PC-3 (cell line): ENCODE measurements at regions of chr13 and their contacts with region 1.

Region 1: GRCh38 chr13:49792550-49793324 is at the start of gene KPNA3:
- DNase-seq: peak; percentile 90
- ATAC-seq: peak; percentile 87
- H3K4me3 ChIP-seq: peak within 1 kb of the TSS; percentile 80
- H3K27ac ChIP-seq: peak within 1 kb of the TSS; percentile 91
- H3K4me1 ChIP-seq: peaks cover 18% of the 10 kb centered on the region
- H3K27me3 ChIP-seq: no peaks in the 10 kb centered on the region
- CTCF ChIP-seq: no peak
- total RNA-seq, gene KPNA3: 11.7 and 14.4 TPM in 2 replicates

Region 2: GRCh38 chr13:49669735-49670309 is 122.9 kb before region 1 on chr13:
- CTCF ChIA-PET with region 1: no interaction called
- POLR2A ChIA-PET with region 1: no interaction called
- intact Hi-C with region 1: loop called (anchors 2 kb)
- DNase-seq: peak; percentile 68
- ATAC-seq: peak; percentile 88
- H3K4me3 ChIP-seq: no peak overlapping the region
- H3K27ac ChIP-seq: no peak overlapping the region
- H3K4me1 ChIP-seq: peaks cover 6% of the 10 kb centered on the region; the same call in 1 of the 2 replicates
- H3K27me3 ChIP-seq: no peaks in the 10 kb centered on the region
- CTCF ChIP-seq: peak; percentile 75

Region 3: DNA sequence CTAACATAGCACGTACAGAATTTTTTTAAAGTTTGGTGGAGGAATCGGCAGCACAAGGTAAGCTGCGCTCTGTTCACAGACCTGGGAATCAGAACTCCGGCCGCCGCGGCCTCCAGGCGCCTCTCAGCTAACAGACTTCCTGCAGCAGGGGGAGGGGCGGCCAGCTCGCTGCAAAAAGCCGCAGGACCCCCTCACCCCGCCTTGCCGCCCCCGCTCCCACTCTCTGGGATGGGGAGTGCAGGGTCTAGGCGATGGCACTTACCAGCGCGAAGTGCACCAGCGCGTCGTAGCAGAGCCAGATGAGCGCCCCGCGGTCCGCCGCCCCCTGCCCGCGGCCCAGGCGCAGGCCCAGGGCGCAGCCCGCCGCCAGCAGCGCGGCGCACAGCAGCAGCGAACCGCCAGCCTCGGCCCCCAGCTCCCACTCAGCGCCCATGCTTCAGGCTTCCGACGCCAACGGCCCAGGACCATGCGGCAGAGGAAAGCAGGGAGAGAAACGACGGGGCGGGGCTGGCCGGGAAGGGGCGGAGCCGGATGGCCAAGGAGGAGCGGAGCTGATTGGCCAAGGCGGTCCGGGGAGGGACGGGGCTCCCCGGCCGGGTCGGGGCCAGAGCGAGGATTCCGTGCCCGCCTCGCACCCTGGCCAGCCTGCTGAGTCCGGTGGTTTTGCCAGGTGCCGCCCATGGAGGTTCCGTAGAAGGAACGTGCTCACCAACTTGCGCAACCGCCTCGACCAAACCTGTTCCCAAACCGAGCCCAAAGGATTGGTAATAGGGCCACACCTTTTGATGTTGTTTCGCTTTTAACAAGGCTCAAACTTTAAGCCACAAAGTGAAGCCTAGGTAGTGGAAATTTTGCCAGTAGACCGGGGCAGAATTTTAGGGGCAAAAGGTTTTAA is 101.5 kb before region 1 on chr13 and contains the start of gene EBPL:
- CTCF ChIA-PET with region 1: interaction called, 4 read pairs
- POLR2A ChIA-PET with region 1: interaction called, 23 read pairs
- intact Hi-C with region 1: loop called (anchors 2 kb)
- DNase-seq: peak; percentile 92
- ATAC-seq: peak; percentile 88
- H3K4me3 ChIP-seq: peak within 1 kb of the TSS; percentile 98
- H3K27ac ChIP-seq: peak within 1 kb of the TSS; percentile 85
- H3K4me1 ChIP-seq: peaks cover 30% of the 10 kb centered on the region
- H3K27me3 ChIP-seq: no peaks in the 10 kb centered on the region
- CTCF ChIP-seq: no peak
- total RNA-seq, gene EBPL: 108 and 118 TPM in 2 replicates

Region 4: GRCh38 chr13:49731766-49732165 is 61.0 kb before region 1 on chr13:
- CTCF ChIA-PET with region 1: no interaction called
- POLR2A ChIA-PET with region 1: no interaction called
- intact Hi-C with region 1: loop called (anchors 5 kb)
- DNase-seq: peak; percentile 66
- ATAC-seq: peak; percentile 81
- H3K4me3 ChIP-seq: no peak overlapping the region
- H3K27ac ChIP-seq: no peak overlapping the region
- H3K4me1 ChIP-seq: peaks cover 15% of the 10 kb centered on the region
- H3K27me3 ChIP-seq: no peaks in the 10 kb centered on the region
- CTCF ChIP-seq: no peak

Region 5: GRCh38 chr13:49806126-49806536 is 13.4 kb after region 1 on chr13:
- CTCF ChIA-PET with region 1: no interaction called
- POLR2A ChIA-PET with region 1: interaction called, 16 read pairs
- intact Hi-C with region 1: no loop called
- DNase-seq: peak; percentile 58
- ATAC-seq: peak; percentile 55
- H3K4me3 ChIP-seq: no peak overlapping the region
- H3K27ac ChIP-seq: no peak overlapping the region
- H3K4me1 ChIP-seq: 0 out of 2 replicates have a peak, but pooled peaks cover 7% of the 10 kb centered on the region
- H3K27me3 ChIP-seq: no peaks in the 10 kb centered on the region
- CTCF ChIP-seq: no peak

Region 6: GRCh38 chr13:49844181-49844580 is 51.4 kb after region 1 on chr13:
- CTCF ChIA-PET with region 1: no interaction called
- POLR2A ChIA-PET with region 1: no interaction called
- intact Hi-C with region 1: loop called (anchors 1 kb)
- DNase-seq: no peak
- ATAC-seq: no peak
- H3K4me3 ChIP-seq: no peak overlapping the region
- H3K27ac ChIP-seq: no peak overlapping the region
- H3K4me1 ChIP-seq: no peaks in the 10 kb centered on the region
- H3K27me3 ChIP-seq: no peaks in the 10 kb centered on the region
- CTCF ChIP-seq: no peak

Region 7: DNA sequence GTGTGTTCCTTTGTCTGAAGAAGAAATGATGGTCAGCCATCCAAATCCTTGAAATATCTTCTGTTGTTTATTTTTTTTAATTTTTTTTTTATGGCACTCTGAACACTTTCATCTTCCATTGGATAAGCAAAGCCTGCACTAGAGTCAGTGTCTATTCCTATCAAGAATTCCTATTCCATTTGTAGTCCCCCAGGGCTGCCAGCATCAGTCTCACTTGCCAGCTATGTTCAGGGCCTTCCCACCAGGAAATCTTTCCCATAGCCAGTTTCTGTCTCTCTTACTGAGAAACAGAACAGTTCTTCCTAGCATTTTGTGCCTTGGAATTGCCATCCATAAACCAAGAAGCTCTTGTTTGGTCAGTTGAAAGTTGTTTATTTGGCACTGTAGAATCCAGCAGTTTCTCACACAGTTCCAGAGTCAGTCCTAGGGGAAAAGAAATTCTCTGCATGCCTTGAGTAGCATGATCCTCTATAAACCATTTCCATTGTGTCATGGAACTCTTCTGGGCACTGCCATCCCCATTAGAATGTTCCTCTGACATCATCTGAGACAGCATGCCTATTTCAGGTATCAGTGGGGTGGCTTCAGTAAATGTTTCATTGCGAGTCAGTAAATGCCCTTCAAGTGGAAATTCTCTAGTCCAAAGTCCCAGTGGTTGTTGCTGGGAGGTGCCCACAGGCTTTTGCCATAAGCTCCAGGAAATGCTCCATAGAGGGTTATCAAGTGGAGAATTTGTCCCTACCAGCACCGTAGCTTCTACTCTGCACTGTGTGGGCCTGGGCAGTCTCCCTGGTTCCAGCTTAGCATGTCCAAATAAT is 162.1 kb after region 1 on chr13:
- CTCF ChIA-PET with region 1: interaction called, 10 read pairs
- POLR2A ChIA-PET with region 1: no interaction called
- intact Hi-C with region 1: no loop called
- DNase-seq: no peak
- ATAC-seq: no peak
- H3K4me3 ChIP-seq: no peak overlapping the region
- H3K27ac ChIP-seq: no peak overlapping the region
- H3K4me1 ChIP-seq: no peaks in the 10 kb centered on the region
- H3K27me3 ChIP-seq: no peaks in the 10 kb centered on the region
- CTCF ChIP-seq: no peak

Region 8: DNA sequence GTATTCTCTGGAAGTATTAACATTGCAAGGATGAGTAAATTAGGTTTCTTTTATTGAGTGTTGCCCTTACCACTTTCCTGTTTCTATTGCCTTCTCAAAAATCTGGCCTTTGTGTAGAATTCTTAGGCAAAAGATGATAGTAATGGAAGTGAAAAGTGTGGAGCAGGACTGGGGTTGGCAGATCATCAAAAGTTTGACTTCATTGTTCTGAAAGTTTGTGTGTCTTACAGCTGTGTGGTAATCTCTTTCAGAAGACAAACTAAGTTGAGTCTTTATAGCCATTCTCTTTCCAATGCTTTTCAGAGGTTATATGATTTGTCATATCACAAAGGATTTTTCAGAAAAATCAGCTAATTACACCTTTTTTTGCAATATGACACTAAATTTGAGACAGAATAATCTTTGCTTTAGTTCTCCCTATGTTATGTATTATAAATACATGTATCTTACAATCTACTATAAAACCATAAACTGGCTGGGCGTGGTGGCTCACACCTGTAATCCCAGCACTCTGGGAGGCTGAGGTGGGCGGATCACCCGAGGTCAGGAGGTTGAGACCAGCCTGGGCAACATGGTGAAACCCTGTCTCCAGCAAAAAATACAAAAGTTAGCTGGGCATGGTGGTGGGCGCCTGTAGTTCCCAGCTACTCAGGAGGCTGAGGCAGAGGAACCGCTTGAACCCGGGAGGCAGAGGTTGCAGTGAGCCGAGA is 213.8 kb after region 1 on chr13:
- CTCF ChIA-PET with region 1: no interaction called
- POLR2A ChIA-PET with region 1: no interaction called
- intact Hi-C with region 1: no loop called
- DNase-seq: no peak
- ATAC-seq: no peak
- H3K4me3 ChIP-seq: no peak overlapping the region
- H3K27ac ChIP-seq: no peak overlapping the region
- H3K4me1 ChIP-seq: no peaks in the 10 kb centered on the region
- H3K27me3 ChIP-seq: no peaks in the 10 kb centered on the region
- CTCF ChIP-seq: no peak